Ascending aorta (tissue), 2 donors: ENCODE measurements at regions of chr5 and their contacts with region 1.

Region 1: GRCh38 chr5:143362664-143363227 is 40.7 kb downstream of the NR3C1 start:
- DNase-seq: no peak
- H3K4me3 ChIP-seq: no peak overlapping the region
- H3K27ac ChIP-seq: no peak overlapping the region
- H3K4me1 ChIP-seq: peaks cover 0 to 15% of the 10 kb centered on the region in 2 donors
- H3K27me3 ChIP-seq: no peaks in the 10 kb centered on the region
- CTCF ChIP-seq: no peak

Region 2: GRCh38 chr5:142324871-142325724 is 1037.6 kb before region 1 on chr5 and contains the start of gene SPRY4:
- intact Hi-C with region 1: no loop called
- DNase-seq: peak; percentile 67 to 96
- H3K4me3 ChIP-seq: peak within 1 kb of the TSS; percentile 83 to 90
- H3K27ac ChIP-seq: peak within 1 kb of the TSS; percentile 96 to 98
- H3K4me1 ChIP-seq: peaks cover 3 to 17% of the 10 kb centered on the region in 2 donors
- H3K27me3 ChIP-seq: no peaks in the 10 kb centered on the region
- CTCF ChIP-seq: peak in 2 of 3 experiments; percentile 1 to 5
- total RNA-seq, gene SPRY4: 111 TPM

Region 3: DNA sequence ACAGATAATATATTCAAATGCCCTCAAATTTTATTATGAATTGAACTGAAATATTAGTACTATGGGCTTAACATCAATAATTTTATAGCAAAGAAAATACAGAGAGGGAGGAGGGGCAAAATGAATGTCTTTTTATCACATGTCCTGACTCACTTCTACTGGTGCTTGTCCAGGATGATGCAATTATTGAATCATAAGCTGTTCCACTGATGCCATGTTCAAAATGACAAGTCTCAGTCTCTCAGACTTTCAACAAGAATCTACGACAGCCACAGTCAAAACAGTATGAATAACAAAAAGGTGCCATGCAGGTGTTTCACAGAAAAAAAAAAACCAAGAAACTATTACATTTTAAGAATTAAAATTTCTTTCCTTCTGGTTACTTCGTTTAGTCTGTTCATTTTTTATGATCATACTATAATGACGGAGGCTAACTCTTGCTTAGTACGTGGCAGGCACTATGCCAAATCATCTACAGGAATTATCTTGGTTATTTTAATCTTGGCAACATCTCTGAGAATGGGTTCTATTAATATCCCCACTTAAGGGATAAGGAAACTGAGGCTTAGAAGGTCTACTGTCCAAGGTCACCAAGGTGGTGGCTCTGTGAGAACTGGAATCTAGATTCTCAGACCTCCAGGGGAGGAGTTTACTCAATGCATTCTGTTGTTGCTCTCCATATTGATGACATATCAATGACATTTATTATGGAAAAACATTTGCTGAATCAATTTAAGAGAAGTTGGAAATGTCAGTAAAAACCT is 20.8 kb before region 1 on chr5:
- intact Hi-C with region 1: loop called (anchors 1 kb)
- DNase-seq: no peak
- H3K4me3 ChIP-seq: no peak overlapping the region
- H3K27ac ChIP-seq: peak overlapping the region in 1 of 2 donors; percentile 4
- H3K4me1 ChIP-seq: peaks cover 5 to 11% of the 10 kb centered on the region in 2 donors
- H3K27me3 ChIP-seq: no peaks in the 10 kb centered on the region
- CTCF ChIP-seq: no peak